HEK293 (cell line): ENCODE measurements at regions of chr21 and their contacts with region 1.

Region 1: GRCh38 chr21:14864211-14865021 is 200.4 kb downstream of the NRIP1 start:
- H3K4me3 ChIP-seq: no peak overlapping the region
- H3K27ac ChIP-seq: no peak overlapping the region
- H3K4me1 ChIP-seq: no peaks in the 10 kb centered on the region
- CTCF ChIP-seq: no peak

Region 2: DNA sequence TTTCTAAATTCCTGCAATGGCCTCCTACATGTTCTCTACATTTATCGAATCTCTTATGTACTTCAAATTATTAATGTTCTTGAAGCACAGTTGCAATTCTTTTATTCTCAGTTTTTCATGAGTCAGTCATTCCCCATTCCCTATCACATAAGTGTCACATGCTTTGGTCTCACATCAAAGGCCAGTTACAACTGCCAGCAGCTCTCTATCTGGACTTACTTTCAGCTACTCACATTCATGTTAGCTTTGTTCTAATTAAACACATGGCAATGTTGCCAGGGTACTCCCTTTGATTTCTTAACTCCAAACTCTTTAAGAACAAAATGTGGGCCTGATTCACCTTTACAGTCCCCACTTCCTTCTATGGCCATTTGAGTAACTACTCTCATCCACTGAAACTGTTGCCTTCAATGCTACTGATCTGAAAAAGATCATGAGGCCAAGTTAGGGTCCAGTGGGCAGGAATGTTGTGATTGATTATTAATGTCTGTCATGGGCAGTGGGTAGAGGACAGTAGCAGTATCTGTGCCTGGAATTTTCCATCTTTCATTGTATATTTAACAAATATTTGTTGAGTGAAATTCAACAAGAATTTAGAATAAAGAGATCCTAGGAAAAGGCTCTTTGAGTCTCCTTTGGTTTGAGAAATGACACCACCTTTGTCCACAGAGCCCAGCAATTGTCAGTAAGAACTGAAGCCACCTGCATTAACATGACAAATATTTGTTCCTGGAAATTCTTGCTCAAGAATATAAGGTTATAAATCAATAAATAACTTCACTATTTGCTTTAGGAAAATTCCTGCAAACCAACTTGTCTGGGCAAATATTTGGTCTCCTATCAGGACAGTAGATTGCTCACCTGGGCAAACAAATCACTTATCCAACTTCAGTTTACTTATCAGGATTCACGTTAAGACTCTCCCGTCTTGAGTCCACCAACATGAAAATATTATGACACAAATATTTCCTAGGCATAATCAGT is 164.7 kb before region 1 on chr21:
- CTCF ChIA-PET with region 1: no interaction called
- POLR2A ChIA-PET with region 1: no interaction called
- H3K4me3 ChIP-seq: no peak overlapping the region
- H3K27ac ChIP-seq: no peak overlapping the region
- H3K4me1 ChIP-seq: no peaks in the 10 kb centered on the region; the same call in 1 of the 2 replicates
- CTCF ChIP-seq: no peak

Region 3: GRCh38 chr21:15483138-15483780 is 618.8 kb after region 1 on chr21:
- CTCF ChIA-PET with region 1: interaction called, 15 read pairs
- POLR2A ChIA-PET with region 1: no interaction called
- H3K4me3 ChIP-seq: no peak overlapping the region
- H3K27ac ChIP-seq: no peak overlapping the region
- H3K4me1 ChIP-seq: no peaks in the 10 kb centered on the region
- CTCF ChIP-seq: peak; percentile 49; the same call in 1 of the 2 replicates

Region 4: DNA sequence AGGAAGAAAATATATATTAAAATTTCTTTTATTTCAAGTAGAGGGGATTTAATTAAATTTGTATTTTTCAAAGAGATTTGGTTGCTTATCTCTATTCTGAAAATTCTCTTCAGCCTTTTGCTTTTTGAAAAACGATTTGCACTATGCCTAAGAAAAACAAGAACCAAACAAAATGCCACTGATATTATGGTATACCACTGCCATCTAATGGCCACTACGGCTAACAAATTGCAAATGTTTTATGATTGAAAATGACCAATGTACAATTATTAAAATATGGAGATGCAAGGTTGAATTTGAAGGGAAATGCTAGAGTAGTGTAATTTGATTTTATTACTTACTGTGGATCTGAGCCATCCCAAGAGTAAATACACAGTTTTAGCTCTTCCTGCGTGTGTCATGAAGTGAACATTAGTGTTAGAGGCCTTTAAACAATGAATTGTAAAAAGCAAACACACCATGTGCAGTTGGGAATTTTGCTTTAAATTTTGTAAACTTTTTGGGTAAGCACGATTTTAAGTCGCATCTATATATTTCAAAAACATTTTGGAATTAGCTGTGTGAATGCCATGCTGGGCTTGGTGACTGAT is 728.0 kb after region 1 on chr21:
- CTCF ChIA-PET with region 1: interaction called, 17 read pairs
- POLR2A ChIA-PET with region 1: no interaction called
- H3K4me3 ChIP-seq: no peak overlapping the region
- H3K27ac ChIP-seq: no peak overlapping the region
- H3K4me1 ChIP-seq: no peaks in the 10 kb centered on the region
- CTCF ChIP-seq: no peak